ENCODE measurements at regions of chr17 and their contacts with region 1.

Region 1: GRCh38 chr17:66200685-66201092 is 8.8 kb upstream of the CEP112 start:
- DNase-seq: no peak

Region 2: GRCh38 chr17:66063686-66064085 is 137.0 kb before region 1 on chr17:
- intact Hi-C with region 1: no loop called
- DNase-seq: no peak

Region 3: GRCh38 chr17:66625311-66625775 is 424.7 kb after region 1 on chr17:
- intact Hi-C with region 1: loop called (anchors 5 kb)
- DNase-seq: no peak

Region 4: GRCh38 chr17:66673668-66674315 is 473.1 kb after region 1 on chr17:
- intact Hi-C with region 1: loop called (anchors 5 kb)
- DNase-seq: no peak

Measured in cardiac septum (tissue), 1 donor.